ENCODE measurements at regions of chr17 and their contacts with region 1.

Region 1: DNA sequence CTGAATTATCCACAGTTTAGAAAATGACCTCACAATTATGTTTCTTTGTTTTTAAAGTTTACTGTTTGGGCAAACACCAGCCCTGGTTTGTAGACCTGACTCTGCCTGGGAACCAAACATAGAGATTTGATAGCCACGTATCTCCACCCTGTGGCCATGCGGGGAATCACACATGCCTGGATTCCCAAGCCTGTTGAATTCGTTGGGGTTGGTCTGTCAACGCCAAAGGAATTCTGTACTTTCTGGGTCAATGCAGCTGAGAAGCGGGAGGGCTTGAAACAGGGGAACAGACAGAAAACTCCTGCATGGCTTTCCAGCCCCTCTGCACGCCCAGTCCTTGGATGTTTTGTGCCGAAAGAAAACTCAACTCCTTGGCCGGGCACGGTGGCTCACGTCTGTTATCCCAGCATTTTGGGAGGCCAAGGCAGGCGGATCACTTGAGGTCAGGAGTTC is 27.0 kb downstream of the CD300A start:
- DNase-seq: peak; percentile 84

Region 2: GRCh38 chr17:74110467-74110866 is 382.9 kb before region 1 on chr17:
- intact Hi-C with region 1: no loop called
- DNase-seq: no peak

Region 3: DNA sequence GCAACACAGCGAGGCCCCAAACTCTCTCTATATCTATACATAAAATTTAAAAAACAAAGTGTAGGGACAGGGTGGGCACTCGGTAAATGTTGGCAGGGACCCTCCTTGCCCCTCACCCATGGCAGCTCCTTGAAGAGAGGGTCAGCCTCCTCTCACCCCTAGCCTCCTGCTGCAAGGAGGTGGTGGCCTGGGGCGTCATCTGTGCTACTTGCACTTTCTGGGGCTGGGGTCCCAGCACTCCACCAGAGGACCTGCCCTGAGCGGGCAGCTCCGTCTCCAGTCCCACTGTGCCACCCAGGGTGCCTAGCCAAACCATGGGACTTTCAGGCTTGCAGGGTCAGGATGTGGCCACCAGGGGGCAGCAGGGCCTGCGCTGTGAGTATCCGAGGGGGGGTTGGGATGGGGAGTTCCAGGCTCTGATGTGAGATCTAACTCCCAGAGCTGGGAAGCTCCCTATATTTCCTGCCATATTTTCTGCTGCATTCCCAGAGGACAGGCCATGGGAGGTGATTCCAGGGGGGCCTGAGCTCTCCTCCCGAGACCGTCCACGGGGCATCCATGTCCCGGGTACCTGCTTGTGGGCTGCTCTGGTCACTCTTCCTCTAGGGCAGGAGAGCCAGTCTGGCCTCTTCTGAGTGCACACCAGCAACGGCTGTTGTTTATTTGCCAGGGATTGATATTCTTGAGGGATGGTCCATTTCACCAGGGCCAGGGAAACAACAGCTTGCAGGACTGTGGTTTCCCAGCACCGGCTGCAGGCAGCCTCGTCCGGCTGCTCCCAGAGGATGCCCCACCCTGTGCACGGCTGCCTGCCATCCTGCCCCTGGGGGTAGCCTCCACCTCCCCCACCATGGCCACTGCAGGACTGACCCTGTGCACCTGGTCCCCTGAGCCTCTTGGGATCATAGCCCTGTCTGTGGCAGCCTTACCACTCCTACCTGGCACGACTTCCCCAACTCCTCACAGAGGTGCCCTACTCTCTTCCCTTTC is 125.0 kb before region 1 on chr17:
- intact Hi-C with region 1: loop called (anchors 1 kb)
- DNase-seq: peak; percentile 86

Measured in cardiac septum (tissue), 1 donor.